K562 (cell line): ENCODE measurements at regions of chr15 and their contacts with region 1.

Region 1: GRCh38 chr15:40593588-40594428 is at the start of gene KNL1:
- DNase-seq: peak; percentile 91 to 95 (median 94)
- ATAC-seq: peak; percentile 83
- H3K4me3 ChIP-seq: peak within 1 kb of the TSS; percentile 74
- H3K27ac ChIP-seq: peak within 1 kb of the TSS; percentile 88
- H3K4me1 ChIP-seq: peaks cover 13 to 16% of the 10 kb centered on the region in 2 experiments; a peak in 4 of 5 replicates
- H3K27me3 ChIP-seq: no peaks in the 10 kb centered on the region
- CTCF ChIP-seq: no peak
- EP300 ChIP-seq: peak; percentile 64; the same call in 1 of the 2 replicates
- POLR2A ChIP-seq: peak; percentile 90
- RAD21 ChIP-seq: no peak; a peak in 1 of 4 replicates
- polyA plus RNA-seq, gene KNL1: 14.5 to 17.9 TPM

Region 2: GRCh38 chr15:40694688-40695468 is 101.1 kb after region 1 on chr15 and contains the start of gene RAD51:
- CTCF ChIA-PET with region 1: no interaction called
- POLR2A ChIA-PET with region 1: interaction called, 3 read pairs
- in situ Hi-C with region 1: no loop called
- intact Hi-C with region 1: loop called (anchors 5 kb)
- DNase-seq: peak; percentile 89 to 96 (median 91)
- ATAC-seq: peak; percentile 94
- H3K4me3 ChIP-seq: peak within 1 kb of the TSS; percentile 54
- H3K27ac ChIP-seq: peak within 1 kb of the TSS; percentile 90
- H3K4me1 ChIP-seq: peaks cover 5 to 14% of the 10 kb centered on the region in 2 experiments; a peak in 4 of 5 replicates
- H3K27me3 ChIP-seq: no peaks in the 10 kb centered on the region
- CTCF ChIP-seq: 0 out of 6 replicates have a peak, but pooled peaks of 1 of the 3 experiments have one; percentile 5
- EP300 ChIP-seq: no peak; the same call in 1 of the 2 replicates
- POLR2A ChIP-seq: peak; percentile 95
- RAD21 ChIP-seq: no peak
- polyA plus RNA-seq, gene RAD51: 16.0 to 16.6 TPM

Region 3: DNA sequence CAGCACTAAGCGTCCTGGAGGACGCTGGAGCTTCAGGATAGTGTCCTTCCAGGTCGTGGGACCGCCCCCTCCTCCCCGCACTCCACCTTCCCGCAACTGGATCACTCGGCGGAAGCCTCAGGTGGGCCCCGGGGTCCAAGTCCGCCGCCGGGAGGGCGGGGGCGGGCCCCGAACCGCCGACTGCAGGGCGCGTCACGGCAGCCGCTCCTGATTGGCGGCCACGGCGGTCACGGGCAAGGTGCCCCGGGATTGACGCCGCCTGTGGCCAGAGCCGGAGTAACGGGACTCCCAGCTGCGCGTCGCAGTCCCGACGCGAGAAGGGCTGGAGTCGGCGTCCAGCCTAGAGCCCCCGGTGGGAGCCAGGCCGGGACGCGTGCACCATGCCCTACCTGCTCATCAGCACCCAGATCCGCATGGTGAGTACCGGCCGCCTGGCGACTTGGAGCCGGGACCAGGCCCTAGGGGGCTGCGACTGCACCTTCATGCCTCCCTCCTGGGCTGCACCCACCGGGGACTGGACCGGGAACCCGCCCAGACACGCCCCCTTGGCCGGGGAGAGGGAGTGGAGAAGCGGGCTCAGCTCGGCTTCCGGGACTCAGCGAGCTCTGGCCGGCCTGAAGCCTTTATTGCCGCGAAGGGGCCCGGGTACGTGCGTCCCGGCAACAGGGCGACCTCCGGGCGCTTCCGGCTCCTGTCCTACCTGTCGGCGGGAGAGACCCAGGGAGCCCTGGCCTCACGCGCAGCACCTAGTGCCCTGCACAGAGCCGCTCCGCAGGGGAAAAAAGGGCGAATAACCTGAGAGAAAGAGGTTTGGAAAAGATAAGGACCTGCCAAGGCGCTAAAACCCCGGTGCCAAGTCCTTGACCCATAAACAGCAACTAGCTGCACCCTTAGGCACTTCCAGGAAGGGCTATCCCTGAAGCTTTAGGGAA is 170.3 kb after region 1 on chr15 and contains the start of gene GCHFR:
- CTCF ChIA-PET with region 1: no interaction called
- POLR2A ChIA-PET with region 1: no interaction called
- in situ Hi-C with region 1: no loop called
- intact Hi-C with region 1: loop called (anchors 10 kb)
- DNase-seq: peak; percentile 88 to 93 (median 92)
- ATAC-seq: peak; percentile 87
- H3K4me3 ChIP-seq: peak within 1 kb of the TSS; percentile 64
- H3K27ac ChIP-seq: peak within 1 kb of the TSS; percentile 82
- H3K4me1 ChIP-seq: peaks cover 21 to 57% of the 10 kb centered on the region in 2 experiments; a peak in 4 of 5 replicates
- H3K27me3 ChIP-seq: no peaks in the 10 kb centered on the region
- CTCF ChIP-seq: peak; percentile 56 to 61 (median 58); a peak in 5 of 6 replicates
- EP300 ChIP-seq: no peak
- POLR2A ChIP-seq: peak; percentile 68
- RAD21 ChIP-seq: peak in 1 of 2 experiments; percentile 8; a peak in 1 of 4 replicates
- polyA plus RNA-seq, gene GCHFR: 10.1 to 18.2 TPM

Region 4: GRCh38 chr15:41838400-41838897 is 1244.6 kb after region 1 on chr15 and contains the start of gene PLA2G4B:
- CTCF ChIA-PET with region 1: no interaction called
- POLR2A ChIA-PET with region 1: no interaction called
- in situ Hi-C with region 1: no loop called
- intact Hi-C with region 1: no loop called
- DNase-seq: no peak
- ATAC-seq: no peak
- H3K4me3 ChIP-seq: no peak within 1 kb of the TSS
- H3K27ac ChIP-seq: no peak within 1 kb of the TSS
- H3K4me1 ChIP-seq: peaks cover 0 to 21% of the 10 kb centered on the region in 2 experiments; a peak in 2 of 5 replicates
- H3K27me3 ChIP-seq: no peaks in the 10 kb centered on the region
- CTCF ChIP-seq: no peak
- EP300 ChIP-seq: no peak
- POLR2A ChIP-seq: no peak
- RAD21 ChIP-seq: no peak
- polyA plus RNA-seq, gene PLA2G4B: 0.07 to 0.25 TPM